ENCODE measurements at regions of chr15 and their contacts with region 1.

Region 1: GRCh38 chr15:23595368-23595767 is 29.9 kb downstream of the MKRN3 start:
- DNase-seq: no peak
- H3K4me3 ChIP-seq: no peak overlapping the region
- H3K27ac ChIP-seq: no peak overlapping the region
- H3K4me1 ChIP-seq: no peaks in the 10 kb centered on the region
- H3K27me3 ChIP-seq: no peaks in the 10 kb centered on the region
- CTCF ChIP-seq: no peak

Region 2: DNA sequence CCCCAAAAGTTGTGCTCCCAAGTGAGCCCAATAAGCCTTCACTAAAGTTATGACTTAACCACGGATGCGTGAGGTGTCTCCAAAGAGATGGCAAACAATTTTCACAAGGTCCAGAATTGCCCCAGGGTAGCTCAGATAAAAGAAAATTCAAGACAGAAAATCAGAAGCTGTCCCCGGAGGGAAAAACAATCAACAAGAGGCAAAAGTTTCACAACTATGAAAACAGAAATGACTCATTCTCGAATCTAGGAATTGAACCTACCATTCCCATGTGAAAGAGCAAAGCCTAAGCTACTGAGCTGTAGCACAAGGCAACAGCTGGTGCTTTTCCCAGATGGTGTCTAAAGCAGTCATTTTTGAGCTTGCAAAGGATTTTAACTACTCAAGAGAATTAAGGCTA is 63.3 kb before region 1 on chr15:
- CTCF ChIA-PET with region 1: no interaction called
- POLR2A ChIA-PET with region 1: no interaction called
- intact Hi-C with region 1: loop called (anchors 10 kb)
- DNase-seq: peak in 1 of 2 experiments; percentile 67
- H3K4me3 ChIP-seq: no peak overlapping the region
- H3K27ac ChIP-seq: no peak overlapping the region
- H3K4me1 ChIP-seq: no peaks in the 10 kb centered on the region
- H3K27me3 ChIP-seq: no peaks in the 10 kb centered on the region
- CTCF ChIP-seq: no peak

Region 3: GRCh38 chr15:23578521-23579150 is 16.7 kb before region 1 on chr15:
- CTCF ChIA-PET with region 1: no interaction called
- POLR2A ChIA-PET with region 1: no interaction called
- intact Hi-C with region 1: no loop called
- DNase-seq: no peak
- H3K4me3 ChIP-seq: no peak overlapping the region
- H3K27ac ChIP-seq: no peak overlapping the region
- H3K4me1 ChIP-seq: no peaks in the 10 kb centered on the region
- H3K27me3 ChIP-seq: no peaks in the 10 kb centered on the region
- CTCF ChIP-seq: no peak

Measured in PC-9 (cell line).